GM13977 (cell line): ENCODE measurements at regions of chr12 and their contacts with region 1.

Region 1: DNA sequence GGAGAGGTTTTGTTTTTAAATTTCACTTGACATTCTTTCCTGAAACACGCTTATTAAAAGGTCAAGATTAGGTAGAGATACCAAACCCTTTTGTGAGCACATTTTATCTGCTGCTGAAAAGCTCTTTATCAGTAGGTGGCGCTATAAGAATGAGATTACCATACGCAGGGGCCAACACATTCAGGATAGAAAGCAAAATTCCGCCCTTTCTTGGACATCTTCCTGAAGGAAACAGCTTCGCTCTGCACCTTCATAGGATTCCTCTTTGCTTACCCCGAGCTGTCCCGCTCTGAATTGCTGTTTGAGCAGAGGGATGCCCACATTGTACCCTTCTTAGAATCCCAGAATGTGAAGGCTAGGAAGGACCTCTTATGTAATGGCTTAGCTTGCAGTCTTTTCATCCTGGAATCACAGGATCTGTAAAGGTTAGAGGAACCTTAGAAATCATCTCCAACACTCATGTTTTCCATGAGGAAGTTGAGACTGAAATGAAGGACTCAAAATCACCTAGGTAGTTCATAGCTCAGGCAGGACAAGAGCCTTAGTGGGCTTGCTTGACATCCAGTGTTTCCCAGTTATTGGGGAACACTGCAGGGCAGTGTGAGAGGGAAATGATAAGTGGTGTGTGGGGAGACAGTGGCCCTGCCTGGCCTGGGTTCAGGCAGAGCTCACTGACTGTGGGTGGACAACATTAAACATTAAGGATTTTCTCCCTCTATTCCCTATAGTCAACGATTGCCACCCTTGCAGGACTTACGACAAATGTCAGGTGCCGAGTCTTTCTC is 38.7 kb upstream of the CRY1 start:
- DNase-seq: peak; percentile 59
- CTCF ChIP-seq: peak; percentile 72

Region 2: GRCh38 chr12:107402041-107403022 is 270.3 kb after region 1 on chr12:
- in situ Hi-C with region 1: loop called (anchors 25 kb)
- DNase-seq: peak; percentile 45
- CTCF ChIP-seq: peak; percentile 61

Region 3: GRCh38 chr12:107607464-107608392 is 475.7 kb after region 1 on chr12:
- in situ Hi-C with region 1: loop called (anchors 10 kb)
- DNase-seq: peak; percentile 81
- CTCF ChIP-seq: peak; percentile 93